ENCODE measurements at regions of chr6 and their contacts with region 1.

Region 1: DNA sequence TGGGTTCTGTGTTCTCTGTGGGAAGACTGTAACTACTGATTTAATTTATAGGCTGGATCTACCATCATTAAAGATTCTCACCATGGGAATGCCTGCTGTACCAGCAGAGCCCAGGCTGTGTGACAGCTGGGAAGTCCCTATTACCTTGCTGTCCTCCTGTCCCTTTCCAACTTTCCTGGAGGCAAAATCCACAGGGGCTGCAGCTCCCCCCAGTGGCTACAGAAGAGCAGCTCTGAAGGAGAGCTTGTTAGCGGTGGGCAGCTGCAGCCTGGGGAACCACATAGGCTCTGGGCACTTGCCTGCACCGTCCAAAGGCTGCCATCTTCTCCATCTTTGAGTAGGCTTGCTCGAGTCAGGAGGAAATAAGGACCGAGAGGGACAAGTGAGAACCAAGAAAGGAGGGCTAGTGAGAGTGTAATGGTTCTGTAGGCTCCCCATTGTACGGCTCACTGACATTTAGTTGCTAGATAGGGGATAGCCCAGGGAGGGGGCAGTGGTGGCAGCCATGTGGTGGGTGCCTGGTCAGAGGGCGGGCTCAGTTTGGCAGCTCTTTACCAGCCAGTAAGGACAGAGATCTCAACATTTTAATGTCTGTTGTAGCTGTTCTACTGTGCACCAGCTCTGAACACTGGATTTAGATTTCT is 155.1 kb upstream of the MLIP start:
- DNase-seq: peak; percentile 83
- H3K4me3 ChIP-seq: no peak overlapping the region
- H3K27ac ChIP-seq: no peak overlapping the region
- H3K4me1 ChIP-seq: no peaks in the 10 kb centered on the region
- H3K27me3 ChIP-seq: no peaks in the 10 kb centered on the region
- CTCF ChIP-seq: peak; percentile 62 to 92
- POLR2A ChIP-seq: no peak

Region 2: DNA sequence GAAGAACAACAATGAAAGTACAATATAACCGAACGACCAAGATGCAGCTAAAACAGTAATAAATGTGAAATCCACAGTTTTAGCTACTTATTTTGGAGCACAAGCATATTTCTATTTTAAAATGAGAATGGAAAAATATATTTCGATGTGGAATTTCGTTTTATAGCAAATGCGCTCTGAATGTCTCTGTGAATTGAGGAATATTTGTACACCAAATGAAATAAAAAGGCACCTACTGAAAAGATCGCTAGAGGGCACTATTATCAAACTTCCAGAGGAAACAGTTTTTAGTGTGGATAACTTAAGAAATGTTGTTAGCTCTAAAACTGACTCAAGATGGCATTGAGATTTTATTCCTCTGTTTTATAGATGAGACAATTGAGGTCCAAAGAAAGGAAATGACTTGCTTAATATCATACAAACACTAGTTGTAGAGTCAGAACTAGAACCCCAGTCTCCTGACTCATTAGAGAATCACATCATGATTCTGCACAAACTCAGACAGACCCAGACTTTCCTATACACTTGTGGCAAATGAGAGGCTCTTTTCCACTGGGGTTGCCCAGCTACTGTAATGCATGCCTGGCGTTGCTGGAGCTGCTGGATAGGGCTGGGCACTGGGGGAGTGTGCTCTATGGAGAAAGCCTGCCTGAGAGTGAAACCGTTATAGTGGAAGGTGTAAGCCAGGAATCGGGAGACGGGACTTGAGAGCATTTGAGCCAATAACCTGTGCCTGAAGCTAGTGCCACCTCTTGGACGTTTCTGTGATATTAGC is 463.1 kb before region 1 on chr6:
- CTCF ChIA-PET with region 1: interaction called, 20 read pairs
- POLR2A ChIA-PET with region 1: no interaction called
- dilution Hi-C with region 1: no loop called
- intact Hi-C with region 1: loop called (anchors 1 kb)
- DNase-seq: peak; percentile 74
- H3K4me3 ChIP-seq: peak overlapping the region in 1 of 3 experiments; percentile 31
- H3K27ac ChIP-seq: no peak overlapping the region
- H3K4me1 ChIP-seq: no peaks in the 10 kb centered on the region
- H3K27me3 ChIP-seq: no peaks in the 10 kb centered on the region
- CTCF ChIP-seq: peak; percentile 51 to 54
- POLR2A ChIP-seq: no peak

Region 3: DNA sequence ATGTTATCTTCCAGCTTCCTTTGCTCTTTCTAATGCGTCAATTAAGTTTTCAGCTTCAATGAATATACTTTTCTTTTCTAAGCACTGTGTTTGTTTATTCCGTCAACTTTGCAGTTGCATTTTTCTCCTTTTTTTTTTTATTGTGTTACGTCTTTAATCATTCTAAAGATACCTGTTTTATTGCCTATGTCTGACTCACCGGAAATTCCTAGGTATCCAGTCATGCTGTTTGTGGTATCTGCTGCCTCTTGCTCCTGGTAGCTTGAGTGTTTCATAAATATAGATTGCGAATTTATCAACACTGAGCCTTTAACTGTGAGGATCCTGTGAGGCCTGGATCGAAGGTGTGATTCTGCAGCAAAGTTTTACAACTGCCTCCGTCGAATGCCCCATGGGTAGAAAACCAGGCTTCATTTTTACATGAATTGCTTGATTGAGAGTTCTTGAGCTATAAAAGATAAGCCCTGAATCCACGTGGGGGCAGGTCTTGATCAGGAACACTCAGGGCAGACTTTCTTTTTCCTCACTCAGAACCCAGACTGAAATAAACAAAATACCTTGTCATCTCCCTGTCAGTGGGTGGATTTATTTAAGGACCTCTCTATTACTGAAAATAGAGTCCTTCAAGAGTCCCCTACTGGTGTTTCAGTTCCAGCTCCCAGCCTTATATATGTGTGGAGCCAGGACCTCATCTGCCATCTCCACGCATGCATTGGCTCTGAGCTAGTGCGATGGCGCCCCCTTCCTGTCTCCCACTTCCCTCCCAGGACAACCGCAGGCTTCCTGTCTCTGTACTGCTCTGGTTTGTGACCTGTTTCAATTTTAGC is 221.5 kb before region 1 on chr6:
- CTCF ChIA-PET with region 1: interaction called, 291 read pairs
- POLR2A ChIA-PET with region 1: interaction called, 3 read pairs
- dilution Hi-C with region 1: no loop called
- intact Hi-C with region 1: no loop called
- DNase-seq: peak; percentile 75
- H3K4me3 ChIP-seq: peak overlapping the region in 1 of 3 experiments; percentile 18
- H3K27ac ChIP-seq: peak overlapping the region; percentile 98
- H3K4me1 ChIP-seq: peaks cover 40% of the 10 kb centered on the region
- H3K27me3 ChIP-seq: no peaks in the 10 kb centered on the region
- CTCF ChIP-seq: peak; percentile 25 to 43
- POLR2A ChIP-seq: no peak

Region 4: DNA sequence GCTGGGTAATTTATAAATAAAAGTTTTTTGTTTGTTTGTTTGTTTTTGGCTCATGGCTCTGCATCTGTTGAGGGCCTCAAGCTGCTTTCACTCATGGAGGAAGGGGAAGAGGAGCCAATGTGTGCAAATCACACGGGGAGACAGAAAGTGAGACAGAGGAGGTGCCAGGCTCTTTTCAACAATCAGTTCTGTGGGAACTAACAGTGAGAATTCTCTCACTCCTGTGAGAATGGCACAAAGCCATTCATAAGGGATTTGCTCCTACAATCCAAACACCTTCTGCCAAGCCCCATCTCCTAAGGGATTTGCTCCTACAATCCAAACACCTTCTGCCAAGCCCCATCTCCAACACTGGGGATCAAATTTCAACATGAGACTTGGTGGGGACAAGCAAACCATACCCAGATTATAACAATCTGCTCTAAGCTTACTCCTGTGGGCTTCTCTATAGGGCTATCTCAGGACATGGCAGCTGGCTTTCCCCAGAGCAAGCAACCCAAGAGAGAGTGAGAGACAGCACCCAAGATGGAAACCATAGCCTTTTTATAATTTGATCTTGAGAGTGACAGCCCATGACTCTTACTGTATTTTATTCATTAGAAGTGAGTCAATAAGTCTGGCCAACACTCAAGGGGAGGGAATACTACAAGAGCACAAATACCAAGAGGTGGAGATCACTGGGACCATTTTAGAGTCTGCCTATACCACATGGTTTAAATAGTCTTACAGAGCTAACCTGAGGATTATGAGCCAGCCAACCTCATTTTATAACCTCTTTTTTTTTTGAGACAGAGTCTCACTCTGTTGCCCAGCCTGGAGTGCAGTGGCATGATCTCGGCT is 184.2 kb before region 1 on chr6:
- CTCF ChIA-PET with region 1: interaction called, 14 read pairs
- POLR2A ChIA-PET with region 1: no interaction called
- dilution Hi-C with region 1: no loop called
- intact Hi-C with region 1: no loop called
- DNase-seq: no peak
- H3K4me3 ChIP-seq: no peak overlapping the region
- H3K27ac ChIP-seq: no peak overlapping the region
- H3K4me1 ChIP-seq: no peaks in the 10 kb centered on the region
- H3K27me3 ChIP-seq: no peaks in the 10 kb centered on the region
- CTCF ChIP-seq: no peak
- POLR2A ChIP-seq: no peak

Region 5: GRCh38 chr6:53811082-53811481 is 145.1 kb before region 1 on chr6:
- CTCF ChIA-PET with region 1: interaction called, 26 read pairs
- POLR2A ChIA-PET with region 1: no interaction called
- dilution Hi-C with region 1: no loop called
- intact Hi-C with region 1: no loop called
- DNase-seq: no peak
- H3K4me3 ChIP-seq: no peak overlapping the region
- H3K27ac ChIP-seq: no peak overlapping the region
- H3K4me1 ChIP-seq: peaks cover 19% of the 10 kb centered on the region
- H3K27me3 ChIP-seq: no peaks in the 10 kb centered on the region
- CTCF ChIP-seq: no peak
- POLR2A ChIP-seq: no peak

Region 6: DNA sequence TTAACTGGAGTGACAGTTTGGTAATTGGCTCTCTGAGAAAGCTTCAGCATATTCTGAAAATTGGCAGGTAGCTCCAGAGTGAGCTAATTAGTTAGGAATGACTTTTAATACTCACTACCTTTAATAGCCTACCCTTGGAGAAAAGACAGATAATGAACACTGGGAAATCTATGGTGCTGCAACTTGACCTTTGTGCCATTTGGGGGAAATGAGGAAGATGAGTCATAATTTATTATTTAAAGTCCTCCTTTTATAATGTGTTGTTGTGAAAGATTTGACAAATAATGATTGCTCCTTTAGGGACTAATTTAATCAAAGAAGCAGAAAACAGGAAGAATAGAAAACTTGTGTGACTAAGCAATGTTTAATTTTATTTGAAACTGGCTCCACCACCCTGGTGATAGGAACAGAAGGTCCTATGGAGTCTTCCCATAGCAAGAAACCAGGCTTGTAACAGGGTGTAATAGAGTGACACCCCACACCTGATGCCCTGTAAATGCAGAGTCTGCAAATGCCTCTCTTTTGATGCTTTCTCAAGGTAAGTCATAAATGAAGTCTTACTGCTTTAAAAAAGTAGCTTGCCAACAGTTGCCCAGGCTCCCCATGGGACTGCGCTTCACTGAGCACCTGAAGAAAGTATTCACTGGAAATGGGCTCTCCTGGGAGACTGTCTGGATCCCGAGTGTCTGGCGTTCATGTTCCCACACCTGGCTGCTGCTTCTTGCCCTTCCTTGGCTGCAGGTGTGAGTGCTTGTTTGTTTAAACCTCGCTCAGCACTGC is 27.0 kb before region 1 on chr6:
- CTCF ChIA-PET with region 1: interaction called, 23 read pairs
- POLR2A ChIA-PET with region 1: no interaction called
- dilution Hi-C with region 1: no loop called
- intact Hi-C with region 1: no loop called
- DNase-seq: peak; percentile 94
- H3K4me3 ChIP-seq: no peak overlapping the region
- H3K27ac ChIP-seq: peak overlapping the region; percentile 71
- H3K4me1 ChIP-seq: peaks cover 42% of the 10 kb centered on the region
- H3K27me3 ChIP-seq: no peaks in the 10 kb centered on the region
- CTCF ChIP-seq: no peak
- POLR2A ChIP-seq: no peak

Region 7: DNA sequence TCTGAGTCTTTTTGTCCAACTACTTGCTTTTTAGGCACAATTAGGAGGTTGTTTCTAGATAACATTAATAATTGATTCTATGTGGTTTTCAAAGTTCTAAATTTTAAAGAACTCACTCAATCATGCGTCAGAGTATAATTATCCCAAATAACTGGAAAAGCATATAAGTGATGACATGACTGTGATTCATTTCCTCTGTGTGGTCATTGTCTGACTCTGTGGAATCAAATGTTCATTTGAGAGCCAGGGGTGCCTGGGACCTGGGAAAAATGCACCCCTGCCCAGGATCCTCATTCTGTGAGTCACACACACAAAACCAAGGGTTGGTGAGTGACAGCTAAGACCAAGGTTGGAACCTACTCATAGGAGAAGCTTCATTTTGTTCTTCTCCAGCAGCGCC is 28.0 kb after region 1 on chr6:
- CTCF ChIA-PET with region 1: no interaction called
- POLR2A ChIA-PET with region 1: no interaction called
- dilution Hi-C with region 1: no loop called
- intact Hi-C with region 1: no loop called
- DNase-seq: peak; percentile 85
- H3K4me3 ChIP-seq: no peak overlapping the region
- H3K27ac ChIP-seq: peak overlapping the region; percentile 40
- H3K4me1 ChIP-seq: peaks cover 13% of the 10 kb centered on the region
- H3K27me3 ChIP-seq: no peaks in the 10 kb centered on the region
- CTCF ChIP-seq: no peak
- POLR2A ChIP-seq: no peak